ENCODE measurements at regions of chr14 and their contacts with region 1.

Region 1: DNA sequence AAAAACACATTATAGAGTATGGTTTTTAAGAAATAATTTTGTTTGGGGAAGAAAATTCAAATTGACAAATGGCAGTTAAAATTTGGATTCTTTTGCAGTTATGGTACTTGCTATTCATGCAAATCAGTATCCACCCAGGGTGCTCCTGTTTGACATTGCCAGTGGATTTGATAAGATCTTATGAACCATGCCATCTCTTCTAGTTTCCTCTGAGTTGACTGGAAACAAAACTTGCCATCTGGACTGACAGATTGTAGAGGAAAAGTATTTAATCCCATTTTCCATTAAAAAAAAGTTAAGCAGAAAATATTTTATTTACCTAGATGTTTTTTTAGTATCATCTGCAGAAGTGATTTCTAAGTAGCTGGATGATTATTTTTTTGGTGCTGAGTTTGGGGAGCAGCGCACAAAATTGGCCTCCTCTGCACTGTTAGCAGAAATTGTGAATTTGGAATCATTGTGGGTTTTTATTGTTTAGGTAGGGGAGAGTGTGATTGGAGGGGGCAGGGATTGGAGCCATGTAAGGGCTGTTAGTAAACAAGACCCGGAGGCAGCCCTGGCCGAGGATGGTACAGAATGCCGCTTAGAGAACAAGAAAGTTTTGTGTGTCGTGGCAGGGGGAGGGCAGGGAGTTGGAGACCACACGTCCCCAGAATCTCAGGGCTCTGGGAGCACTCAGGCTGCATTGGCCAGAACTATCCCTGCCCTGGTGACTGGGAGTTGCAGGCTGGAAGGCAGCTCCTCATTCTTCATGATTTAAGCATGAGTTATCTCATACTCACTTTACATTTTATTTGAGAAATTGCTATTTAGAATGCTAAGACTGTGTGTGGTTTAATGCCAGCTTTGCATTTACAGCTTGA is 56.6 kb downstream of the WDR20 start:
- DNase-seq: no peak
- ATAC-seq: no peak; the same call in 1 of the 2 replicates
- H3K4me3 ChIP-seq: no peak overlapping the region
- H3K27ac ChIP-seq: no peak overlapping the region
- H3K4me1 ChIP-seq: peaks cover 7% of the 10 kb centered on the region
- H3K27me3 ChIP-seq: no peaks in the 10 kb centered on the region
- CTCF ChIP-seq: no peak
- POLR2A ChIP-seq: no peak
- RAD21 ChIP-seq: no peak

Region 2: GRCh38 chr14:102103062-102103695 is 93.1 kb before region 1 on chr14:
- CTCF ChIA-PET with region 1: no interaction called
- POLR2A ChIA-PET with region 1: no interaction called
- dilution Hi-C with region 1: no loop called
- in situ Hi-C with region 1: no loop called
- intact Hi-C with region 1: no loop called
- DNase-seq: no peak
- ATAC-seq: no peak
- H3K4me3 ChIP-seq: no peak overlapping the region
- H3K27ac ChIP-seq: no peak overlapping the region
- H3K4me1 ChIP-seq: no peaks in the 10 kb centered on the region
- H3K27me3 ChIP-seq: no peaks in the 10 kb centered on the region; the same call in 1 of the 2 replicates
- CTCF ChIP-seq: no peak
- POLR2A ChIP-seq: no peak
- RAD21 ChIP-seq: no peak

Region 3: DNA sequence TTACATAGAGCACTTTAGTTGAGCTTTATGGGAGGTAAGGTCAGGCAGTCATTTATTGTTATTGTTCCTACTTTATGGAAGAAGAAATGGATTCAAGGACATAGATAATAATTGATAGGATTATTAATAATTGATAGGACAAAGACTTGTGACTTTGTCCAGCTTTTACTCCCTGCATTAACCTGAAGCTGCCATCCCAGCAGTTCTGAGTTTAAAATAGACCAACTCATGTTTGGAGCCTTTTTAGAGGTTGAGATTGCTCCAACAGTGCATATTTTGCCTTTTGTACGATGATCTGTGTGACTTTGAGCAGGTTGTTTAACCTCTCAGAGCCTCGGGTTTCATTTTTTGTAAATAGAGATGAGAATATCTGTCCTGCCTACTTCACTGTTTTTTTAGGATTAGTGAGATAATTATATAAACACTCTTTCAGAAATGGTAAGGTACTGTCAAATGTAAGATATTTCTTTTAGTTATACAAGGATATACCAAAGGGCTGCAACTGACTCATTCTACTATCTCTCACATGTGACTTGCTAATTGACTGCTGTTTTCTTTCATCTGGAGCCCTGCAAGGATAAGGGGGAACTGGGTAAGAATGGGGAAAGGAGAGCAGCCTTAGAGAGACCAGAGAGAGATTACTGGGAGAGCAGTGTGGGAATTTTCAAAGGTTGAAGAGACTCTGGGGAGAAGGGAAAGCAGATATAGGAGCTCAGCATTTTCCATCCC is 41.3 kb before region 1 on chr14:
- CTCF ChIA-PET with region 1: no interaction called
- POLR2A ChIA-PET with region 1: no interaction called
- dilution Hi-C with region 1: no loop called
- in situ Hi-C with region 1: no loop called
- intact Hi-C with region 1: loop called (anchors 5 kb)
- DNase-seq: peak; percentile 67
- ATAC-seq: peak; percentile 85
- H3K4me3 ChIP-seq: no peak overlapping the region
- H3K27ac ChIP-seq: no peak overlapping the region
- H3K4me1 ChIP-seq: peaks cover 7% of the 10 kb centered on the region
- H3K27me3 ChIP-seq: no peaks in the 10 kb centered on the region
- CTCF ChIP-seq: no peak
- POLR2A ChIP-seq: no peak
- RAD21 ChIP-seq: no peak

Measured in IMR-90 (cell line).